ENCODE measurements at regions of chr17 and their contacts with region 1.

Region 1: GRCh38 chr17:68247445-68248198 is at the start of gene AMZ2:
- DNase-seq: peak; percentile 89
- H3K4me3 Mint-ChIP-seq: peak within 1 kb of the TSS; percentile 90
- H3K27ac Mint-ChIP-seq: peak within 1 kb of the TSS; percentile 74
- H3K4me1 Mint-ChIP-seq: peaks cover 5% of the 10 kb centered on the region
- H3K27me3 Mint-ChIP-seq: no peaks in the 10 kb centered on the region
- CTCF ChIP-seq: no peak
- total RNA-seq, gene AMZ2: 127 and 147 TPM in 2 replicates

Region 2: GRCh38 chr17:66944351-66945139 is 1303.1 kb before region 1 on chr17:
- CTCF ChIA-PET with region 1: no interaction called
- POLR2A ChIA-PET with region 1: no interaction called
- intact Hi-C with region 1: no loop called
- DNase-seq: no peak
- H3K4me3 Mint-ChIP-seq: no peak overlapping the region
- H3K27ac Mint-ChIP-seq: no peak overlapping the region
- H3K4me1 Mint-ChIP-seq: peaks cover 20% of the 10 kb centered on the region
- H3K27me3 Mint-ChIP-seq: peaks cover 54% of the 10 kb centered on the region
- CTCF ChIP-seq: no peak

Region 3: GRCh38 chr17:68101075-68101992 is 146.3 kb before region 1 on chr17:
- CTCF ChIA-PET with region 1: no interaction called
- POLR2A ChIA-PET with region 1: interaction called, 10 read pairs
- intact Hi-C with region 1: no loop called
- DNase-seq: peak; percentile 93
- H3K4me3 Mint-ChIP-seq: peak overlapping the region; percentile 96
- H3K27ac Mint-ChIP-seq: peak overlapping the region; percentile 94
- H3K4me1 Mint-ChIP-seq: peaks cover 10% of the 10 kb centered on the region
- H3K27me3 Mint-ChIP-seq: no peaks in the 10 kb centered on the region
- CTCF ChIP-seq: no peak

Region 4: DNA sequence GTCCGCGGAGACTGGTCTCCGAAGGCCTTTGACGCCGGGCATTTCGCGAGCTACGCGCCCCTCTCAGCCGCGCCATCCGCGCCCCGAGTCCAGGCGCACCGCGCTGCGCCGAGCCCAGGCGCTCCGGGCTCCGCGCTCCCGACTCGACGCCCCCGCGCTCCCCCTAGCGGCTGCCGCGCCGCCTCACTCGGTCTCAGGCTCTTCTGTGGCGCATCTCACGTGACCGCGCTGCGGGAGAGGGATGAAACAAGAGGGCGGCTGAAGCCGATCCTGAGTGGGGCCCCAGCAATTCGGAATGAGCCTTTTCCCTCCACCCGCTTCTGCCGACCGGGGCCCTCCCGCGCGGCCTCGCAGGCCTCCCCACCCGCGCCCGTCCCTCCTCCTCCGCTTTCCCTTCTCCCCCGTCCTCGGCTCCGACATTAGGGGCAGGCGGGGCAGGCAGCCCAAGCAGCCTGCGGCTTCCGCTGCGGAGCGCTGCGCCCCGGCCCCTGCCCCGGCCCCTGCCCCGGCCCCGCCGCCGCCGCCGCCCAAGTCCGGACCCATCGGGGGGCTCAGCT is 42.3 kb before region 1 on chr17:
- CTCF ChIA-PET with region 1: interaction called, 5 read pairs
- POLR2A ChIA-PET with region 1: interaction called, 23 read pairs
- intact Hi-C with region 1: loop called (anchors 5 kb)
- DNase-seq: peak; percentile 86
- H3K4me3 Mint-ChIP-seq: peak overlapping the region; percentile 77
- H3K27ac Mint-ChIP-seq: no peak overlapping the region
- H3K4me1 Mint-ChIP-seq: peaks cover 9% of the 10 kb centered on the region
- H3K27me3 Mint-ChIP-seq: peaks cover 4% of the 10 kb centered on the region
- CTCF ChIP-seq: peak; percentile 85

Region 5: DNA sequence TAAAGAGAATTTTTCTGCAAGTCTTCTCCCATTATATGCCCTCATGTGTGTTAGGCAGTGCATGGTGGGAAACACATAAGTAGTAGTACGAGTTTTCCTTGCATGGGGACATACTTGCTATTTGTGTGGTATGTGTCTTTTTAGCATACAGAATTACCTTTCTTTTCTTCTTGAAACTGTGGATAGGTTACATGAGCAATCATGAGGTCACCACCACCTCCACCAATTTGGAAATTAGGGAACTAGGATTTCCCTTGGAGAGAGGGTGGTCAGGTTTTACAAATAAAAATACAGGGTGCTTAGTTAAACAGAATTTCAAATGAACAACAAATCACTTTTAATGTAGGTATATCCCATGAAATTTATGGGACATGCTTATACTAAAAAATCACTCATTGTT is 16.1 kb before region 1 on chr17:
- CTCF ChIA-PET with region 1: no interaction called
- POLR2A ChIA-PET with region 1: interaction called, 20 read pairs
- intact Hi-C with region 1: no loop called
- DNase-seq: no peak
- H3K4me3 Mint-ChIP-seq: no peak overlapping the region
- H3K27ac Mint-ChIP-seq: no peak overlapping the region
- H3K4me1 Mint-ChIP-seq: peaks cover 5% of the 10 kb centered on the region
- H3K27me3 Mint-ChIP-seq: peaks cover 7% of the 10 kb centered on the region
- CTCF ChIP-seq: no peak

Region 6: DNA sequence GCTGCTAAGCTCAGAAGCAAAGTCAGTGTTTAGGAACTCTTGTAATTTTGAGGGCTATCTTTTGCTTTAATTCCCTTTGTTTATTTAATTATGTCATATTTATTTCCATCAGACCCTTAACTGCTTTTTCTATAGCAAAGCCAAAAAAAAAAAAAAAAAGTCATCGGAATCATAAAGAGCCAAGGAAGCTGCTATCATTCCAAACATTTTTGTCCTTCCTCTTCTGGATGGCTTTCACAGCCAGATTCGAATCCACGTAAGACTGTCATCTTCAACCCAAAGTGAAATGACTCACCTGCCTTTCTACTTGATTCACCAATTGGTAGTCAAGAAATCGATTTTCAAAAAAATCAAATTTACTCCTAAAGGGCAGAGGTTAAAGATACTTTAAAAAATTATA is 171.3 kb after region 1 on chr17:
- CTCF ChIA-PET with region 1: no interaction called
- POLR2A ChIA-PET with region 1: interaction called, 11 read pairs
- intact Hi-C with region 1: no loop called
- DNase-seq: no peak
- H3K4me3 Mint-ChIP-seq: no peak overlapping the region
- H3K27ac Mint-ChIP-seq: no peak overlapping the region
- H3K4me1 Mint-ChIP-seq: peaks cover 11% of the 10 kb centered on the region
- H3K27me3 Mint-ChIP-seq: no peaks in the 10 kb centered on the region
- CTCF ChIP-seq: no peak

Region 7: DNA sequence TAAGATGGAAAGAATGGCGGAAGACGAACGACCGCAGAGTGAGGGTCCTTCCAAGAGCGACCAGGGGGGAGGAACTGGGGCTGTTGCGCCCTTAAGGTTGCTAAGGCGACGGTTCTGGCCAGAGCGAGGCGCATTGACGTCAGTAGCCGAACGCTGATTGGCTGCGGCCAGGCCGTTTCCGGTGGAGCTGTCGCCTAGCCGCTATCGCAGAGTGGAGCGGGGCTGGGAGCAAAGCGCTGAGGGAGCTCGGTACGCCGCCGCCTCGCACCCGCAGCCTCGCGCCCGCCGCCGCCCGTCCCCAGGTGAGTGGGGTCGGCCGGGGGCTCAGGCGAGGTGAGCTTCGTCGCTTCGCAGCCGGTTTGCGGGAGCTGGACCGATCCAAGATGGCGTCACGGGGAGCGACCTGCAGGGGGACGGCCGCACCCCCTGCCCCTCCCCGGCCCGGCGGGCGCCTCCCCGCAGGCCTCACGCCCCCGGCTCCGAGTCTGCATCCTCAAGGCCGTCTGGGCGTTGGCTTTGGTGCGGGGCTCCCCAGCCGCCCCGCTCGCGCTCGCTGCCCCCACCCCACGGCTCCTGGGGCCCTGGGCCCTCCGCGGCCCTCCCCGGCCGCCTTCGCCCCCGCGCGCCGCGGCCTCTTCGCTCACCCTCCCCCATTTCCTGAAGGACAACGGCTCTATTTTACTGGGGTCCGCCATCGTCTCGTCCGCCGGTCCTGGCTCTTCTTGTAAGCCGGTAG is 264.8 kb after region 1 on chr17 and contains the start of gene PRKAR1A:
- CTCF ChIA-PET with region 1: no interaction called
- POLR2A ChIA-PET with region 1: interaction called, 18 read pairs
- intact Hi-C with region 1: no loop called
- DNase-seq: peak; percentile 91
- H3K4me3 Mint-ChIP-seq: peak within 1 kb of the TSS; percentile 95
- H3K27ac Mint-ChIP-seq: peak within 1 kb of the TSS; percentile 98
- H3K4me1 Mint-ChIP-seq: peaks cover 25% of the 10 kb centered on the region
- H3K27me3 Mint-ChIP-seq: no peaks in the 10 kb centered on the region
- CTCF ChIP-seq: no peak
- total RNA-seq, gene PRKAR1A: 264 and 271 TPM in 2 replicates

Measured in MCF 10A (cell line).